Heart right ventricle (tissue), 16 donors: ENCODE measurements at regions of chr1 and their contacts with region 1.

Region 1: GRCh38 chr1:45303582-45304310 is 22.9 kb upstream of the HPDL start:
- DNase-seq: peak; percentile 99
- ATAC-seq: peak; percentile 97 to 98 (median 98)
- H3K4me3 ChIP-seq: peak overlapping the region; percentile 36 to 94 (median 82)
- H3K27ac ChIP-seq: peak overlapping the region; percentile 76 to 96 (median 94)
- H3K4me1 ChIP-seq: peaks cover 0 to 17% (median 10%) of the 10 kb centered on the region in 9 donors
- H3K27me3 ChIP-seq: no peaks in the 10 kb centered on the region
- CTCF ChIP-seq: peak in 8 of 9 donors; percentile 42 to 83 (median 72)

Region 2: GRCh38 chr1:44730741-44731512 is 572.8 kb before region 1 on chr1 and contains the start of gene RNU5D-1:
- intact Hi-C with region 1: loop called in 4 of 10 experiments (anchors 2 to 10 kb)
- DNase-seq: peak; percentile 90 to 95
- ATAC-seq: peak; percentile 82 to 92 (median 89)
- H3K4me3 ChIP-seq: peak within 1 kb of the TSS in 8 of 10 donors; percentile 8 to 43 (median 28)
- H3K27ac ChIP-seq: peak within 1 kb of the TSS; percentile 66 to 96 (median 89)
- H3K4me1 ChIP-seq: peaks cover 0 to 43% (median 8%) of the 10 kb centered on the region in 9 donors
- H3K27me3 ChIP-seq: no peaks in the 10 kb centered on the region
- CTCF ChIP-seq: peak; percentile 72 to 91 (median 86)
- total RNA-seq, gene RNU5D-1: not detected

Region 3: DNA sequence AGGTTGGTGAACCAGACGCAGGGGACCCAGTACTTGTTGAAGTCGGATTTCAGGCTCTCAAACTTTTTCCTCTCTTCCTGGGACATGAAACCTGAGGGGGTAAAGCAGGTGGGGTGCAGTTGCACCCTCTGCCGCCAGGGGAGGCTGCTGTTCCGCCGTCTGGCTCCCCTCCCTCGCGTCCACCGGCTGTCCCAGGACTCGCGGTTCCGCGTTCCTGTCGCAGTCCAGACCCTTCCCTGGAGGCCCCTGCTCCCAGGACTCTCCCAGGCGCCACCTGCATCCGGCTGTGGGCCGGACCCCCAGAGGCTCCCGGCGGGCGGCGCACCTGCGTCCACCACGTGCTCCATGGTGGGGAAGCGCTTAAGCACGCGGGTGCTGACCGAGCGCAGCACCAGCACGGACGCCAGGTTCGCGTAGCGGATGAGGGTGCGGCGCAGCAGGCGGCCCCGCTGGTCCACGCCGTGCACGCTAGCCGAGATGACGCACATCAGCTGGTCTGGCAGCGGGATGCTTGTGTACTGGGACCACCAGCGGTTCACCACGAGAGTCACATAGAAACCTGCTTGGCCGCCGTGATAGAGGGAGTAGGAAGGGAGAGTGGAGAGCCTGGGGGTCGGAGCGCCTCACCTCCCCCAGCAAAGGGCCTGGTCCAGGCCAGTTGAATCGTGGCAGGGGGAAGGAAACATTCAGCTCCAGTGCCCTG is 517.5 kb before region 1 on chr1:
- intact Hi-C with region 1: loop called in 5 of 10 experiments (anchors 5 to 10 kb)
- DNase-seq: peak; percentile 64 to 73
- ATAC-seq: peak; percentile 57 to 81 (median 74)
- H3K4me3 ChIP-seq: peak overlapping the region; percentile 12 to 62 (median 51)
- H3K27ac ChIP-seq: peak overlapping the region in 9 of 10 donors; percentile 34 to 82 (median 58)
- H3K4me1 ChIP-seq: peaks cover 0 to 34% (median 29%) of the 10 kb centered on the region in 9 donors
- H3K27me3 ChIP-seq: peaks cover 0 to 7% (median 0%) of the 10 kb centered on the region in 7 donors
- CTCF ChIP-seq: peak; percentile 89 to 99 (median 97)

Region 4: DNA sequence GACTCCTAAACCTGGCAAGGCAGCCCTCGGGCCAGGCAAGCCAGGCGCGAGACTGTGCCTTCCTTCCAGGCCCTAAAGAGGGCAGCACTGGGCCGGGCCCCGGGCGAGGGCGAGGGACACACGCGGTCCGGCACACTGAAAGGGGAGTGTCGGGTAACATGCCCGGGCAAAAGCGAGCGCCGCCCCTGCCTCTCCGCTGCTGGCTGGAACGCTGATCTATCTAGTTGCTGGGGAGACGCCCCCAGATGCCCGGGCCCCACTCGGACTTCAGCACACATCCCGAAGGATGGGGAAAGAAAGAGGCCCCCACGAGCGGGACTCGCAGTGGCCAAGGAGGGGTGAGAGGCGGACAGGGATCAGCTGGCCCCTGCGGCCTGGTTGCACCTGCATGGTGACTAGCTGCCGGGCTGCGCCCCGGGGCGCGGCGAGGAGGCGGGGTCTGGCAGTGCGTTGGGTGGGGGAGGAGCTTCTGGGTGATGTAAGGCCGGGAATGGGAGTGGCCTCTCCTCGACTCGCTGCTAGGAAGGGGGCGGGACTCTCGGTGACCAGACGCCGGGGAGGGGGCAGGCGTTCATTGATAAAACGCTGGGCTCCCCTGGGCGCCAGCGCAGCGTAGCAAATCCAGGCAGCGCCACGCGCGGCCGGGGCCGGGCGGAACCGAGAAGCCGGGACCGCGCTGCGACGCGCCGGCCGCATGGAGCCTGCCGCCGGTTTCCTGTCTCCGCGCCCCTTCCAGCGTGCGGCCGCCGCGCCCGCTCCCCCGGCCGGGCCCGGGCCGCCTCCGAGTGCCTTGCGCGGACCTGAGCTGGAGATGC is 503.8 kb before region 1 on chr1 and contains the start of gene PLK3:
- intact Hi-C with region 1: loop called in 1 of 10 experiments (anchors 10 kb)
- DNase-seq: peak; percentile 96 to 99
- ATAC-seq: peak; percentile 95 to 98 (median 96)
- H3K4me3 ChIP-seq: peak within 1 kb of the TSS; percentile 64 to 98 (median 92)
- H3K27ac ChIP-seq: peak within 1 kb of the TSS; percentile 85 to 100 (median 96)
- H3K4me1 ChIP-seq: peaks cover 11 to 48% (median 41%) of the 10 kb centered on the region in 9 donors
- H3K27me3 ChIP-seq: no peaks in the 10 kb centered on the region
- CTCF ChIP-seq: peak; percentile 92 to 98 (median 96)
- total RNA-seq, gene PLK3: 2.9 to 10.3 (median 6.8) TPM

Region 5: DNA sequence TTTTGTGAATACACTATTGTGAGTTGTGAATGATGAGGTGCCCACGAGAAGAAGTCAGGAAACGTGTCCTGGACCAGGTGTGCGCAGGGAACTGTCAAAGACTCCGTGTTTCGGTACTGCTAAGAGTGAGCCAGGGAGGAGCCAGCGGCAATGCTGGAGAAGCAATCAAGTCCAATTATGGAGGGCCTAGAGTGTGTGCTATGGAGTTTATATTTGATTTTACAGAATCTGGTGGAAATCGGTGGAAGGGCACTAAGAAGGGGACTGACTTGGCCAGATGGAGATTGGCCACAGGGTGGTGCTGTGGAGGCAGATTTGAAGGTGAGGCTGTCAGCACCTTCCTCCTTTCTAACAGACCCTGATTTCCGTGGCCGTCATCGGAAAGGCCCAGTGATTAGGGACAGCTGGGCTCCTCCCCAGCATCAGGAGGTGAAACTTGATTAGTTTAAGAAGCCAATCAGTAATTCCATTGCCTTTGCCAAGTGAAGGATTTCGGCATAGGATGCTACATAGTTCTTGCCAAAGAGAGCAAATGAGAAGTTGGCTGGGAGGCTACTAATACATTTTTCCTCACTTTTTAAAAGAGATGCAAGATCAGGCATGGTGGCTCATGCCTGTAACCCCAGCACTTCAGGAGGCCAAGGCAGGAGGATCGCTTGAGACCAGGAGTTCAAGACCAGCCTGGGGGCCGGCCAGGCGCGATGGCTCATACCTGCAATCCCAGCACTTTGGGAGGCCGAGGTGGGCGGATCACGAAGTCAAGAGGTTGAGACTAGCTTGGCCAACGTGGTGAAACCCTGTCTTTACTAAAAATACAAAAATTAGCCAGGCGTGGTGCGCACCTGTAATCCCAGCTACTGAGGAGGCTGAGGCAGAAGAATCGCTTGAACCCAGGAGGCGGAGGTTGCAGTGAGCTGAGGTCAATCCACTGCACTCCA is 467.7 kb before region 1 on chr1:
- intact Hi-C with region 1: loop called in 4 of 10 experiments (anchors 5 to 10 kb)
- DNase-seq: peak; percentile 85 to 87
- ATAC-seq: peak; percentile 78 to 89 (median 84)
- H3K4me3 ChIP-seq: no peak overlapping the region
- H3K27ac ChIP-seq: peak overlapping the region in 1 of 10 donors; percentile 8
- H3K4me1 ChIP-seq: peaks cover 0 to 19% (median 0%) of the 10 kb centered on the region in 9 donors
- H3K27me3 ChIP-seq: no peaks in the 10 kb centered on the region
- CTCF ChIP-seq: peak; percentile 74 to 96 (median 86)

Region 6: DNA sequence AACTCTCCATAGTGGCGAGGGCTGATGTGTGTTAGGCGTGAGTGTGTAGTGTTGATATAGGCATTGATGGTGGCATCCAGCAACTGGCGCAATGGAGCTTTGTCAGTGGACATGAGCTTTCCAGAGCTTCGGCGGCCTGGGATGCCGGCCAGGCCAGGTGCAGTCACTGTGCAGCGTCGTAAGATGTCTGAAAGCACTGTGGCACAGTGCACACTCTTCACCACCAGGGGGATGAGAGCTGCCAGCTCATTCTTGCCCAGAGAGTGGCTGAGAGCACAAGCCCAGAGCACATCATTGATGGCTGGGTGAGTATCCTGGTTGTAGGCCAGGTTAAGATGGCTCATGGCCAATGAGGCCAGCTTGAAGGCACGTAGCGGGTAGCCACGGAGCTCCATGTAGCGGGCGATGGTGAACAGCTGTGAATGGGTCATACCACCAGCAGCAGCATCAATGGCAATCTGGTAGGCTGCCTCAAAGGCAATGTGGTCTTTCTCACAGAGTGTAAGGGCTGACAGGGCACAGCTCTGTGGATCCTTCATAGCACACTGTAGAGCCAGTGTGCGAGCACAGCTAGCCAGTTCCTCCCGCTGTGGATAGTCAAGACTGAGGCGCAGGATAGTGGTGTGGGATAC is 285.0 kb before region 1 on chr1:
- intact Hi-C with region 1: loop called in 9 of 10 experiments (anchors 1 to 2 kb)
- DNase-seq: no peak
- ATAC-seq: peak in 7 of 8 donors; percentile 51 to 73 (median 63)
- H3K4me3 ChIP-seq: no peak overlapping the region
- H3K27ac ChIP-seq: no peak overlapping the region
- H3K4me1 ChIP-seq: peaks cover 0 to 13% (median 7%) of the 10 kb centered on the region in 9 donors
- H3K27me3 ChIP-seq: no peaks in the 10 kb centered on the region
- CTCF ChIP-seq: peak; percentile 17 to 77 (median 59)

Region 7: DNA sequence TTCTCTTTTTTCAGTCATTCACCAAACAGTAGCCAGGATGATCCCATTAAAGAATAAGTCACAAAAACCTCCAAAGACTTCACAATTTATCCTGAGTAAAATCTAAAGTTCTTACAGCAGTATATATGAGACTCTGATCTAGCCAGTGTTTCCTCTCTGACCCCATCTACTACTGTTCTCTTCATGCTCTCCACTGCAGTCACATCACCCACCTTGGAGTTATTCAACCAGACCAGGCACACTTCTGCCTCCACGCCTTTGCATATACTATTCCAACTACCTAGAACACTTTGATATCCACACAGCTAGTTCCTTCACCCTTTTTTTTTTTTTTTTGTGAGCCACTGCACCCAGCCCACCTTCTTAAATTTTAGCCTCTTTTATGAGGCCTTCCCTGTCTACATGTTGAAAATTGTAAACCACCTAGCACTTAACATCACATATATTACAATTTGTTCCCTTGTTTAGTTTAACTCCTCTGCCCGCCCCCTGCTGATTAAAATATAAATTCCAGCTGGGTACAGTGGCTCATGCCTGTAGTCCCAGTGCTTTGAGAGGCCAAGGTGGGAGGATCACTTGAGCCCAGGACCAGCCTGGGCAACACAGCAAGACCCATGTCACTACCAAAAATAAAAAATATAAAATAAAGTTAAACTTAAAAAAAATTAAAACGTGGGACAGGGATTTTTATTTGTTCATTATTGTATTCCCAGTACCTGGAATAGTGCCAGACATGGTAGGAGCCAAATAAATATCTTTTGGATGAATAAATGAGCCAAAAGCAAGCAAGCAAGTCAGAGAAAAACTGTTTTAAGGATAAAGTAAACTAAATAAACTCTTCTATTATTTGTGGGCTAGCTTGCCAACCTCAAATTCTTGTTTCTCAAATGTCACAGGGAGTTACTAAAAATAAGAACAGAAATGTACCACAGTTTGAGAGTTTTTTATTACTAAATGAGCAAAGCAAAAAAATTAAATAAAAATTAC is 71.7 kb after region 1 on chr1:
- intact Hi-C with region 1: no loop called
- DNase-seq: no peak
- ATAC-seq: no peak
- H3K4me3 ChIP-seq: no peak overlapping the region
- H3K27ac ChIP-seq: peak overlapping the region in 1 of 10 donors; percentile 14
- H3K4me1 ChIP-seq: peaks cover 0 to 18% (median 0%) of the 10 kb centered on the region in 9 donors
- H3K27me3 ChIP-seq: no peaks in the 10 kb centered on the region
- CTCF ChIP-seq: peak in 2 of 9 donors; percentile 11 to 13